Activated CD4-positive, alpha-beta memory T cell treated with anti-CD3 and anti-CD28 coated beads for 36 hours (primary cell): ENCODE measurements at regions of chr20 and their contacts with region 1.

Region 1: DNA sequence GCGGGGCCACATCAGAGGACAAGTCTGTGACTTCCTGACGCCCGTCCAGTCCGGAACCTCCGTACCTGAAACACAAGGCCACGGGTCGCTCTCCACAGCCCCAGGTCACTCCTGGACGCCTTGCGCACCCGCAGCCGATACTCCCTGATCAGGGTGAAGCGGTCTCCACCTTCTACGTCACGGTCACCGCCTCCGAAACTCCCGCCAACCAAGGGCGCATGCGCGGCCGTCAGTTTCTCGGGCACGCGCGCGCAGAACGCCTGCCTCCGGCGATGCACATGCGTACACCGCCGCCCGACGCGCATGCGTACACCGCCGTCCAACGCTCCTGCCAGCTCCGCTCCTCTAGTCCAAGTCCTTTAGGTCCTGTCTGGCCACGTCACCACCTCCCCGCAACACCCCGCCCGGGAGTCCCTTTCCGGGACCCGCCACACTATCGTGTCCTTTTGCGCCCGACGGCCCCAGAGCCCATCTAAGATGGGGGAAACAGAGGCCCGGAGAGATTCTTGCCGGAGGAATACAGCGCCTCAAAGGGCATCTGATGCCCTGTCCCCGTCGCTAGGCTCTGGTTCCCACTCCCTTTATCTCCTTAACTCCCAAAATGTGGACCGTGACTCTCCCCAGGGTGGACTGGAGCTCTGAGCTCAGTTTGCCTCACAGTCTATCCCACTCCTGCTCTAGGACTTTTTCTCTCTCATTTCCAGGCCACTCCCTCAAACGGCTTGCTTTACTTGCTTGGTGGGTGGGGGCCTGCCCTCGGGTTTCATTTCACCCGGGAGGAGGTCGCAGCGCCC is at the start of gene DSN1:
- DNase-seq: peak; percentile 99
- H3K4me3 Mint-ChIP-seq: peak within 1 kb of the TSS; percentile 89
- H3K27ac Mint-ChIP-seq: peak within 1 kb of the TSS; percentile 91
- H3K4me1 Mint-ChIP-seq: peaks cover 26% of the 10 kb centered on the region
- H3K27me3 Mint-ChIP-seq: peaks cover 2% of the 10 kb centered on the region
- total RNA-seq, gene DSN1: 25.9 to 30.1 TPM

Region 2: GRCh38 chr20:36384022-36384619 is 389.7 kb before region 1 on chr20:
- CTCF ChIA-PET with region 1: no interaction called
- POLR2A ChIA-PET with region 1: no interaction called
- intact Hi-C with region 1: no loop called
- DNase-seq: peak; percentile 66
- H3K4me3 Mint-ChIP-seq: no peak overlapping the region
- H3K27ac Mint-ChIP-seq: no peak overlapping the region
- H3K4me1 Mint-ChIP-seq: no peaks in the 10 kb centered on the region
- H3K27me3 Mint-ChIP-seq: peaks cover 14% of the 10 kb centered on the region

Region 3: DNA sequence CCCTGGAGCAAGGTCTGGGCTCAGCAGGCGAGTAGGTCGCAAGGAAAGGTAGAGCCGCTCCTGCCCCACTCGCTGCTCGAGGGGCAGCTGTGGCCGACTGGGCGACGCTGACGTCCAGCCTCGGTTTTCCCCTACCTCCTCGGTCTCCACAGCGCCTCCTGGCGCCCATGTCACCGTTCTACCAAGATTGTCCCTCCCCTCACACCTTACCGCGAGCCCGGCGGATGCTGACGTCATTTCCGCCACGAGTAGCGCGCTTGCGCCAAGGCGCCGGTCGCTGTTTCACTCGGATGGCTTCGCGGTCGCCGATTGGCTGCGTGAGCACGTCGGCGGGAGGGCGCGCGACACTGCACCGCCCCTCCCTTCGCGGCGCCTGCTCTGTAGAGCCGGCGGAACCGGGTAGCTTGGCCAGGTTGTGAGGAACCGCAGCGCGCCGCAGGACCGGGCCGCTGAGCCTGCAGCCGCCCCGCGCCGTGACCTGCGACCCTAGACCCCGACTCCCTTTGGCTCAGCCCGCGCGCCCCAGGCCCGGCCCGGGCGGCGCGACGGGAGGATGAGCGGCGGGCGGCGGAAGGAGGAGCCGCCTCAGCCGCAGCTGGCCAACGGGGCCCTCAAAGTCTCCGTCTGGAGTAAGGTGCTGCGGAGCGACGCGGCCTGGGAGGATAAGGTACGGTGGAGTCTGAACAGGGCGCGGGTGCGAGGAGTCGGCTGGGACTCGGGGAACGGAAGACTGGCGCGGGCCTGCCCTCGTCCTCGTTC is 168.2 kb before region 1 on chr20 and contains the start of gene RAB5IF:
- CTCF ChIA-PET with region 1: interaction called, 13 read pairs
- POLR2A ChIA-PET with region 1: no interaction called
- intact Hi-C with region 1: loop called (anchors 5 kb)
- DNase-seq: peak; percentile 100
- H3K4me3 Mint-ChIP-seq: peak within 1 kb of the TSS; percentile 99
- H3K27ac Mint-ChIP-seq: peak within 1 kb of the TSS; percentile 97
- H3K4me1 Mint-ChIP-seq: peaks cover 28% of the 10 kb centered on the region
- H3K27me3 Mint-ChIP-seq: no peaks in the 10 kb centered on the region
- total RNA-seq, gene RAB5IF: 113 to 114 TPM

Region 4: GRCh38 chr20:36717657-36718056 is 56.1 kb before region 1 on chr20:
- CTCF ChIA-PET with region 1: no interaction called
- POLR2A ChIA-PET with region 1: no interaction called
- intact Hi-C with region 1: no loop called
- DNase-seq: no peak
- H3K4me3 Mint-ChIP-seq: no peak overlapping the region
- H3K27ac Mint-ChIP-seq: no peak overlapping the region
- H3K4me1 Mint-ChIP-seq: peaks cover 10% of the 10 kb centered on the region
- H3K27me3 Mint-ChIP-seq: no peaks in the 10 kb centered on the region

Region 5: GRCh38 chr20:36728986-36729385 is 44.8 kb before region 1 on chr20:
- CTCF ChIA-PET with region 1: no interaction called
- POLR2A ChIA-PET with region 1: interaction called, 3 read pairs
- intact Hi-C with region 1: loop called (anchors 1 kb)
- DNase-seq: peak; percentile 26
- H3K4me3 Mint-ChIP-seq: no peak overlapping the region
- H3K27ac Mint-ChIP-seq: no peak overlapping the region
- H3K4me1 Mint-ChIP-seq: peaks cover 22% of the 10 kb centered on the region
- H3K27me3 Mint-ChIP-seq: no peaks in the 10 kb centered on the region

Region 6: GRCh38 chr20:36754656-36755222 is 19.1 kb before region 1 on chr20:
- CTCF ChIA-PET with region 1: interaction called, 25 read pairs
- POLR2A ChIA-PET with region 1: interaction called, 8 read pairs
- intact Hi-C with region 1: no loop called
- DNase-seq: peak; percentile 47
- H3K4me3 Mint-ChIP-seq: no peak overlapping the region
- H3K27ac Mint-ChIP-seq: no peak overlapping the region
- H3K4me1 Mint-ChIP-seq: peaks cover 4% of the 10 kb centered on the region
- H3K27me3 Mint-ChIP-seq: no peaks in the 10 kb centered on the region

Region 7: GRCh38 chr20:36886859-36887751 is 113.3 kb after region 1 on chr20:
- CTCF ChIA-PET with region 1: interaction called, 3 read pairs
- POLR2A ChIA-PET with region 1: no interaction called
- intact Hi-C with region 1: loop called (anchors 10 kb)
- DNase-seq: peak; percentile 90
- H3K4me3 Mint-ChIP-seq: no peak overlapping the region
- H3K27ac Mint-ChIP-seq: no peak overlapping the region
- H3K4me1 Mint-ChIP-seq: peaks cover 25% of the 10 kb centered on the region
- H3K27me3 Mint-ChIP-seq: no peaks in the 10 kb centered on the region

Region 8: DNA sequence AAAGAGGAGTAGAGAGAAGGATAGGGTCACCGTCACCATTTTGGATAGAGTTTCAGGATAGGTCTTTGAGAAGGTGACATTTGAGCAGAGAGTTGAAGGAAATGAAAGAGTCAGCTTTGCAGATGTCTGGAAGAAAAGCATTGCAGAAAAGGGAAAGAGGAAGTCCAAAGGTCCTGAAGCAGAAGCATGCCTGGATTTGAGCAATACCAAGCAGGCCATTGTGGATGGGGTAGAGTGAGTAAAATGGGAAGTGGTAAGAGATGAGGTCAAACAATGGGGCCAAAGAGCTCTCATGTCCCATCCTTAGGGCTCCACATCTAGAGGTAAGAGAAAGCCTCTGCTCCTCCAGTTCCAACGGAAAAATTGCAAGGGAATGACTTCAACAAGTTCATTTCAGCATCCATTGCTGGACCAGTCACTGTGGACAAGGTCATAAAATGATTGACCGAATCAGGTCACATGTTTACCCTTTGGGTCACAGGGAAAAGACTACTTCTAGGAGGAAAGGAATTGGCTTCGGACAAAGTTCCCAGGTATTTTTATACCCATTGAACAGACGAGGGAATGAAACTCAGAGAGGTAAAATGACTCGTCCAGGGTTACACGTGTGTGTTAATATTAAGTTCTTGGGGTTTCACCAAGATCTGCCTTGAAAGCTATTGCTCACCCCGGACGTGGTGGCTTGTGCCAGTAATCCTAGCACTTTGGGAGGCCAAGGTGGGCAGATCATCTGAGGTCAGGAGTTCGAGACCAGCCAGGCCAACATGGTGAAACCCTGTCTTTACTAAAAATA is 184.3 kb after region 1 on chr20:
- CTCF ChIA-PET with region 1: no interaction called
- POLR2A ChIA-PET with region 1: no interaction called
- intact Hi-C with region 1: no loop called
- DNase-seq: peak; percentile 45
- H3K4me3 Mint-ChIP-seq: no peak overlapping the region
- H3K27ac Mint-ChIP-seq: no peak overlapping the region
- H3K4me1 Mint-ChIP-seq: peaks cover 29% of the 10 kb centered on the region
- H3K27me3 Mint-ChIP-seq: no peaks in the 10 kb centered on the region